Gastrocnemius medialis (tissue), 4 donors: ENCODE measurements at regions of chr17 and their contacts with region 1.

Region 1: DNA sequence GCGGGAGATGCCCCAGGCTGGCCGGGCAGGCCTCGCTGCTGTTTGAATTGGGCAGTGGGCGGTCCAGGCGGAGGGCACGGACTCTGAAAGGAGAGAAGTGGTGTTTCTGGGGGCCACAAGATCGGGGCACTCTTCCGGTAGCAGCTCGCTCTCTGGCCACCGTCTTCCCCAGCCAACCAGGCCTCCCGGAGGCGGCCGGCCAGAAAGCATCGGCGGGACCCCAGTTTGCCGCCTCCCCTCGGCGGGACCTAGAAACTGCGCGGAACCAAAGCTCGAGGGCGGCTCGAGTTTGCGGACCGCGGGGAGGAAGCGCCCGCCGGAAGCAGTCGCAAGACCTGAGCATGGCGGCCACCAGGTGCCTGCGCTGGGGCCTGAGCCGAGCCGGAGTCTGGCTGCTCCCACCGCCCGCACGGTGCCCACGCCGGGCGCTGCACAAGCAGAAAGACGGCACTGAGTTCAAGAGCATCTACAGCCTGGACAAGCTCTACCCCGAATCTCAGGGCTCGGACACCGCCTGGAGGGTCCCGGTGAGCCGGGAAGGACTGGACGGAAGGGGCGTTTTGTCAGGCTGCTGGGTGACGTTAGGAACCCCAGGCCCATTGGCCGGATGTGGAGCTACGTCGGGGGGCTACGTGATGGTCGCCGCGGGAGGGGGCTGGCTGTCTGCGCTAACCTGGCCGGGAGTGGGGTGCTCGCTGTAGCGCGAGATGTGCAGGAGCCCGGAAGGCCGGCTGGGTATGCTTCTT is at the start of gene MRPL58:
- DNase-seq: peak; percentile 60 to 72
- ATAC-seq: peak; percentile 93 to 94
- H3K4me3 ChIP-seq: peak within 1 kb of the TSS; percentile 82 to 98 (median 88)
- H3K27ac ChIP-seq: peak within 1 kb of the TSS; percentile 79 to 87 (median 82)
- H3K4me1 ChIP-seq: peaks cover 16 to 22% of the 10 kb centered on the region in 2 donors
- H3K27me3 ChIP-seq: no peaks in the 10 kb centered on the region
- CTCF ChIP-seq: peak; percentile 45 to 72 (median 60)
- POLR2A ChIP-seq: no peak
- total RNA-seq, gene MRPL58: 97.9 to 141 (median 107) TPM

Region 2: GRCh38 chr17:74972973-74973328 is 39.6 kb before region 1 on chr17:
- in situ Hi-C with region 1: no loop called
- intact Hi-C with region 1: loop called (anchors 1 kb)
- DNase-seq: no peak
- ATAC-seq: no peak
- H3K4me3 ChIP-seq: peak overlapping the region; percentile 54 to 63 (median 60)
- H3K27ac ChIP-seq: no peak overlapping the region
- H3K4me1 ChIP-seq: peaks cover 0 to 7% of the 10 kb centered on the region in 2 donors
- H3K27me3 ChIP-seq: peaks cover 11 to 28% (median 20%) of the 10 kb centered on the region in 3 donors
- CTCF ChIP-seq: no peak
- POLR2A ChIP-seq: no peak

Region 3: DNA sequence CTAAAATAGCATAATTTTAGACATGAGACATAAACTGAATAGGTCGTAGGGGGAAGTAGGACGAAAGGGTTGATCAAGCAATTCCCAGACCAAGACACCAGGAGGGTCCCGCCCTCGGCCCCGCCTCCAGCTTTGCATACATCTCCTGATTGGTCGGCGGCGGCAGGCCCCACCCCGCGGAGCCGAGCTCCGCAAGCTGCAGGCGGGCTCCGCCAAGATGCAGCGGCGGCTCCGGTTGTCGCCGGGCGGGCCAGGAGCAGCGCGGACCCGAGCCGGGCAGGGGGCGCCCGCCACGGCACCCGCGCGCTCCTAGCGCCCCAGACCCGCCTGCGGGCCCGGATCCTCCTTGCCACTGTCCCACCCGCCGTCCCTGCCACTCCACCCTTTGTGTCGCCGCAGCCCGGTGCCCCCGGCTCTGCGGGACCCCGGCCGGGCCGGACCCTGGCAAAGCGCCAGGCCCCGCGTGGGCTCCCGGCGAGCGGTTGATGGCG is 25.1 kb before region 1 on chr17 and contains the start of gene CDR2L:
- in situ Hi-C with region 1: no loop called
- intact Hi-C with region 1: loop called (anchors 2 kb)
- DNase-seq: peak; percentile 92
- ATAC-seq: peak; percentile 89 to 90
- H3K4me3 ChIP-seq: peak within 1 kb of the TSS; percentile 63 to 87 (median 70)
- H3K27ac ChIP-seq: peak within 1 kb of the TSS; percentile 82 to 86 (median 84)
- H3K4me1 ChIP-seq: peaks cover 11 to 21% of the 10 kb centered on the region in 2 donors
- H3K27me3 ChIP-seq: peaks cover 0 to 9% (median 8%) of the 10 kb centered on the region in 3 donors
- CTCF ChIP-seq: no peak
- POLR2A ChIP-seq: peak; percentile 82 to 87
- total RNA-seq, gene CDR2L: 1.3 to 3.6 (median 2.6) TPM

Region 4: GRCh38 chr17:75087558-75088453 is 75.3 kb after region 1 on chr17 and contains the start of gene SLC16A5:
- in situ Hi-C with region 1: no loop called
- intact Hi-C with region 1: no loop called
- DNase-seq: peak; percentile 57 to 79
- ATAC-seq: peak; percentile 65 to 71
- H3K4me3 ChIP-seq: peak within 1 kb of the TSS; percentile 63 to 77 (median 70)
- H3K27ac ChIP-seq: peak within 1 kb of the TSS; percentile 77 to 90 (median 84)
- H3K4me1 ChIP-seq: peaks cover 24 to 34% of the 10 kb centered on the region in 2 donors
- H3K27me3 ChIP-seq: no peaks in the 10 kb centered on the region
- CTCF ChIP-seq: peak in 1 of 5 experiments; percentile 4
- POLR2A ChIP-seq: peak; percentile 45 to 46
- total RNA-seq, gene SLC16A5: 1.5 to 7.9 (median 6.9) TPM